HepG2 (cell line): ENCODE measurements at regions of chr12 and their contacts with region 1.

Region 1: DNA sequence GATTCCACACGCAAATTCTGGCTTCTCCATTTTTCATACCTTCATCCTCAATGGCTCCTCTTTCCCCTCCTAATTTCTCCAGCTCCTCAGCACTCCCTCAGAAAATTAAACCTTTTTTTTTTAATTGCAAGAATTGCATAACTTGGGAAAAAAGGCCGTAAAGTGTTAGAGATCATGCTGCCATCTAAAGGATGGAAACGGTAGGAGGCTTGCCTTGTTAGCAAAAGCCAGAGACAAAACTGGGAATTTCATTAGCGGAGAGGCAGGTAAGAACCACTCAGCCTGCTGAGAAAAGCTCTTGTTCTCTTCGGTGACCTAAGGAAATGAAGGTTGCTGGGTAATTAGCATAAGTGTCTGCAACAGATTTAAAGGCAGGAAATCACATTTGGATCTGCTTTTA is 204.3 kb downstream of the AEBP2 start:
- DNase-seq: peak; percentile 5
- ATAC-seq: peak; percentile 68; the same call in 2 of the 3 replicates
- H3K4me3 ChIP-seq: no peak overlapping the region
- H3K27ac ChIP-seq: no peak overlapping the region
- H3K4me1 ChIP-seq: no peaks in the 10 kb centered on the region
- H3K27me3 ChIP-seq: no peaks in the 10 kb centered on the region; a peak in 1 of 5 replicates
- CTCF ChIP-seq: peak; percentile 48
- EP300 ChIP-seq: no peak
- POLR2A ChIP-seq: no peak
- RAD21 ChIP-seq: no peak

Region 2: DNA sequence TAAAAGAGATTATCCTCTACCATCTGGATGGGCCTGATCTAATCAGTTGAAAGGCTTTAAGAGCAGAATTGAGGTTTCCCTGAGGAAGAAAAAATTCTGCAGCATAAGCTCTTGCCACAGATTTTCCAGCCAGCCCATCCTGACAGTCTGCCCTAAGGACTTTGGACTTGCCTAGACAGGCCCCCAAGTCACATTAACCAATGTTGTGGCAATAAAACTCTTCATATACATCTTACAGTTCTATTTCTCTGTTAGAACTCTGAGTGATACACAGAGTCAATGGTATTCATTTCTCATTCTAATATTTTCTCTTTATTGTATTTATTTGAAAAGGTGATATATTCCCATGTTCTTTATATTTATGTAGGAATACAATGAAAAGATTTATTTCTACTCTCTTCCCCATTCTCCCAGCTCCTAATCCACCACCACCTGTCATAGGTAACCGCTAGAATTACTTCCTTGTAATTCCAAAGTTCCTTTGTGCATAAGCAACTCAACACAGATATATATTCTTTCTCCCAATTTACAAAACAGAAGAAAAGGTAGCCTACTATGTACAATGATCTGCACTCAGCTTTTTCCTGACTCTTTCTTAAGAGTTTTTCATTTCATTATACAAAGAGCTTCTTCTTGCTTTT is 723.6 kb before region 1 on chr12:
- CTCF ChIA-PET with region 1: no interaction called
- POLR2A ChIA-PET with region 1: no interaction called
- in situ Hi-C with region 1: no loop called
- intact Hi-C with region 1: no loop called
- DNase-seq: no peak
- ATAC-seq: peak; percentile 49; the same call in 1 of the 3 replicates
- H3K4me3 ChIP-seq: no peak overlapping the region
- H3K27ac ChIP-seq: no peak overlapping the region
- H3K4me1 ChIP-seq: no peaks in the 10 kb centered on the region
- H3K27me3 ChIP-seq: no peaks in the 10 kb centered on the region; a peak in 1 of 5 replicates
- CTCF ChIP-seq: no peak
- EP300 ChIP-seq: no peak
- POLR2A ChIP-seq: no peak
- RAD21 ChIP-seq: no peak

Region 3: GRCh38 chr12:19572920-19573558 is 70.6 kb before region 1 on chr12:
- CTCF ChIA-PET with region 1: no interaction called
- POLR2A ChIA-PET with region 1: no interaction called
- in situ Hi-C with region 1: no loop called
- intact Hi-C with region 1: loop called (anchors 5 kb)
- DNase-seq: peak; percentile 45
- ATAC-seq: peak; percentile 89
- H3K4me3 ChIP-seq: no peak overlapping the region
- H3K27ac ChIP-seq: no peak overlapping the region
- H3K4me1 ChIP-seq: no peaks in the 10 kb centered on the region
- H3K27me3 ChIP-seq: no peaks in the 10 kb centered on the region
- CTCF ChIP-seq: peak; percentile 69
- EP300 ChIP-seq: no peak
- POLR2A ChIP-seq: no peak
- RAD21 ChIP-seq: no peak